Activated CD4-positive, alpha-beta memory T cell treated with anti-CD3 and anti-CD28 coated beads, Interleukin-2, amount 10 ng/mL, durations not matched to agents 7 days and 5 days (primary cell): ENCODE measurements at regions of chr9 and their contacts with region 1.

Region 1: DNA sequence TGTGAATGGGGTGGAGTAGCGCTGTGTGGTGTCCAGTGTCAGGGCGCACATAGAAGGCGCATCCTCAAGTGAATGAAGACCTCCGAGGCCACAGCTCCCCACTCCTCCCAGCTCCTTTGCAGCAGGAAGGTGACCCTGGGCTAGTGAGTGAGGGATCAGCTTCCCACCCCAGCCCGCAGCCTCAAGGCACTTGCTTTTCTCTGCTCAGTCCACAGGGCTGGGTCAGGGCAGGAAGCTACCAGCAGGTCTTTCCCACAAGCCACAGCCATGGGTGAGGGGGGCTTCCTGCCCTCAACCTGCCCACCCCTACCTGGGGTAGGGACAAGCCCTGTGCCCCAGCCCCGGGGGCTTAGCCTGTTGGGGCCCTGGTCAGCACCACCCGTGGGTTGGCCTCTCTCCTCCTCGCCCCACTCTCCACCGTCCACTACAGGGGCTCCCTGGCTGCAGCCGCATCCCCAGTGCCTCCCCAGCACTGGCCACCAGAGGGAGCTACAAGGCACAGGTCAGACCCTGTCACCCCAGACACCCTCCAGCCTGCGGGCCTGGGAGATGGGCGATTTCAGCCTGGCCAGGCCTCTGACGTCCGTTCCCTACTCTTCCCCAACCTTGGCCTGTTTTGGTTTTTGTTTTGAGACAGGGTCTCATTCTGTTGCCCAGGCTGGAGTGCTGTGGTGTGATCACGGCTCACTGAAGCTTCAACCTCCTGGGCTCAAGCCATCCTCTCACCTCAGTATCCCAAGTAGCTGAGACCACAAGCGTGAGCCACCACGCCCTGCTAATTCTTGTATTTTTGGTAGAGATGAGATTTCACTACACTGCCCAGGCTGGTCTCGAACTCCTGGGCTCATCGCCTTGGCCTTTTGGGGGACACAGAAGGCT is 1.3 kb upstream of the ABCA2 start:
- DNase-seq: peak; percentile 79
- H3K4me3 Mint-ChIP-seq: peak overlapping the region; percentile 76
- H3K27ac Mint-ChIP-seq: peak overlapping the region; percentile 91
- H3K4me1 Mint-ChIP-seq: peaks cover 57% of the 10 kb centered on the region
- H3K27me3 Mint-ChIP-seq: no peaks in the 10 kb centered on the region

Region 2: GRCh38 chr9:136965771-136966484 is 63.4 kb before region 1 on chr9:
- CTCF ChIA-PET with region 1: interaction called, 10 read pairs
- POLR2A ChIA-PET with region 1: no interaction called
- DNase-seq: peak; percentile 65
- H3K4me3 Mint-ChIP-seq: peak overlapping the region; percentile 55
- H3K27ac Mint-ChIP-seq: peak overlapping the region; percentile 93
- H3K4me1 Mint-ChIP-seq: peaks cover 41% of the 10 kb centered on the region
- H3K27me3 Mint-ChIP-seq: peaks cover 2% of the 10 kb centered on the region

Region 3: GRCh38 chr9:136991993-136992818 is 37.1 kb before region 1 on chr9 and contains the start of gene PAXX:
- CTCF ChIA-PET with region 1: interaction called, 26 read pairs
- POLR2A ChIA-PET with region 1: interaction called, 15 read pairs
- DNase-seq: peak; percentile 95
- H3K4me3 Mint-ChIP-seq: peak within 1 kb of the TSS; percentile 78
- H3K27ac Mint-ChIP-seq: peak within 1 kb of the TSS; percentile 81
- H3K4me1 Mint-ChIP-seq: peaks cover 36% of the 10 kb centered on the region
- H3K27me3 Mint-ChIP-seq: peaks cover 27% of the 10 kb centered on the region
- total RNA-seq, gene PAXX: 64.4 to 68.5 TPM

Region 4: DNA sequence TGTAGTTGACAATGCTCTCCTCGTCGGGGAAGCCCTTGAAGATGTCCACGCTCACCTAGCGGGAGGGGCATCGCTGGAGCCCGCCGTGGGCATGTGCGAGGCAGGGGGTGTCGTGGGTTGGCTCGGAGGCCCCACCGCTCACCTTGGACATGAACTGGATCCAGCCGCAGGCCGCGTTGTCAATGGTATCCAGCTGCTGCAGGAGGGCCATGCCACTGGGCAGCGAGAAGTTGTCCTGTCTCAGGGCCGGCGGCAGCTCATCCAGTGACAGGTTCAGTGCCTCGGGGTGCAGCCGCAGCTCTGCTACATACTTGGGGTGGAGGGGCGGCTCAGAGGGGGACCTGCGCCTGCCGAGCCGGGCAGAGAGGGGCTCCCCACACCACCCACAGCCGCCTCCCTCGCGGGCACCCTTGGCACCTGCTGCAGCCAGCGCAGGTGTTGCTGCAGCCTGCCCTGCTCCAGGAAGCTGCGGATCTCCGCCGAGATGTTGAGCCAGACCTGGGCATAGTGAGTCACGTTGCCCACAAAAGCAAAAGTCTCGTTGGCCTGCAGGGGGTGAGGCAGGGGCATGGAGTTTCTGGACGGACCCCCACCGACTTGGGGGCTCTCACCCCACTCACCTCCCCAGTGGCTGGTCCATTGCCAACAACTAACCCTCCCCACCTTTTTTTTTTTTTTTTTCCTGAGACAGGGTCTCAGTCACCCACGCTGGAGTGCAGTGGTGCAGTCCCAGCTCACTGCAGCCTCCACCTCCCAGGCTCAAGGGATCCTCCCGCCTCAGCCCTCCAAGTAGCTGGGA is 10.3 kb before region 1 on chr9:
- CTCF ChIA-PET with region 1: interaction called, 21 read pairs
- POLR2A ChIA-PET with region 1: interaction called, 4 read pairs
- DNase-seq: no peak
- H3K4me3 Mint-ChIP-seq: no peak overlapping the region
- H3K27ac Mint-ChIP-seq: no peak overlapping the region
- H3K4me1 Mint-ChIP-seq: peaks cover 6% of the 10 kb centered on the region
- H3K27me3 Mint-ChIP-seq: no peaks in the 10 kb centered on the region

Region 5: DNA sequence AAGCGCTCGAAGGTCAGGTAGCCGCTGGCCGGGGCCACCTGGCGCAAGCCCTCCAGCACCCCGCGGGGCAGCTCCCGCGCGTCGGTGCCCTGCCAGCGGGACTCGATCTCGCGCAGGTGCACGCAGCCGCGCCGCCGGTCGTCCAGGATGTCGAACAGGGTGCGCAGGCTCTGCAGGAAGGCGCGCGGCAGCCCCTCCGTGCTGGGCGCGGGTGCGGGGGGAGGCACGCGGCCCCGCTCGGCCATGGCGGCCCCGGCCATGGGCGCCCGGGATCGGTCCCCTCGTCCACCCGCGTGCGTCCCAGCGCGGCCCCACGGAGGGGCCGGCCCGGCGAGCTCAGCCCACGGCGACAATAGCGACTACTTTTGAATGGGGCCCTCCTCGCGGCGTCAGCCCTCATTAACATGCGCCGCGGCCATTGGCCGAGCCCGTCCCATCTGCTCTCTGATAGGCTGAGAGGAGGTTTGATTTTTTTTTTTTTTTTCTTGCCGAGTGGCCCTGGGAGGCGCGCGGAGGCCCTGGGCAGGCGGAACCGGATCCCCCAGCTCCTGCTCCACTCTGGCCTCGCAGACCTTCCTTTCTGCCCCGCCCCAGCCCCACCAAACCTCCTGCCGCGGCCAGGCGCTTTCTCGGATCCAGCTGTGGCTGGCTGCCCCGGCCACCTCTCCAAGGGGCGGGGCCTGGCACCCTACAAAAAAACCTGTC is 41.1 kb after region 1 on chr9 and contains the start of gene SAPCD2:
- CTCF ChIA-PET with region 1: interaction called, 105 read pairs
- POLR2A ChIA-PET with region 1: interaction called, 10 read pairs
- DNase-seq: peak; percentile 90
- H3K4me3 Mint-ChIP-seq: peak within 1 kb of the TSS; percentile 73
- H3K27ac Mint-ChIP-seq: peak within 1 kb of the TSS; percentile 63
- H3K4me1 Mint-ChIP-seq: peaks cover 37% of the 10 kb centered on the region
- H3K27me3 Mint-ChIP-seq: no peaks in the 10 kb centered on the region
- total RNA-seq, gene SAPCD2: 26.8 to 27.0 TPM